ENCODE measurements at regions of chr3 and their contacts with region 1.

Region 1: DNA sequence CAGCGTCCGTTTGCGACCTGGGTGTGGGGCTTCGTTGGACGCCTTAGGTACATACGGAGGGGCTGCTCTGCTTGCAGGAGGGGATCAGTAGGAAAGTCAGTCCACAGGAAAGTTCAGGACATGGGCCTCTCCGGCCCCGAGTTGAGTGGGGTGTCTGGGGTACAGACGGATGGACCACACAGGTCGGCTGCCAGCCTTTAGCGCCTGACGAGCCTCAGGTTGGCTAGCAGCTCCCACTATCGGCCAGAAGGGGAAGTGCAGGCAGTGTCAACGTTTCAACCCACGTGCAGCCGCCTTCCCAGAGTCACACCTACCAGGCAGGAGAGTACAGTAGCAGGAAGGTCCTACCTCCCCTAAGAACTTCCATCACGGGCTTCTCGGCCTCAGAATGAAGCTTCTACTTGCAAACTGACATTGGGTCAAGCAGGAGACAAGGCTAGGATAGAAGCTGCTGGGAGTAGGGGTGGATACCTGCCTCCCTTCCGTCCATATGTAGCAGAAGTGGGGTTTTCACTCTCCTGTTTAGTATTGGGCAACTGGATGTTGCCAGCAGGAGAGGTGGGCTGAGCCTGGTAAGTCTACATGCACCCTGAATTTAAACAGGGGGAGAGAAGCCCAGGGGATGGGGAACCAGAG is 1.8 kb upstream of the SCN5A start:
- DNase-seq: no peak
- H3K4me3 ChIP-seq: no peak overlapping the region
- CTCF ChIP-seq: peak; percentile 96

Region 2: GRCh38 chr3:38404286-38404685 is 247.0 kb before region 1 on chr3:
- CTCF ChIA-PET with region 1: no interaction called
- POLR2A ChIA-PET with region 1: no interaction called
- DNase-seq: no peak
- H3K4me3 ChIP-seq: no peak overlapping the region
- CTCF ChIP-seq: no peak

Region 3: DNA sequence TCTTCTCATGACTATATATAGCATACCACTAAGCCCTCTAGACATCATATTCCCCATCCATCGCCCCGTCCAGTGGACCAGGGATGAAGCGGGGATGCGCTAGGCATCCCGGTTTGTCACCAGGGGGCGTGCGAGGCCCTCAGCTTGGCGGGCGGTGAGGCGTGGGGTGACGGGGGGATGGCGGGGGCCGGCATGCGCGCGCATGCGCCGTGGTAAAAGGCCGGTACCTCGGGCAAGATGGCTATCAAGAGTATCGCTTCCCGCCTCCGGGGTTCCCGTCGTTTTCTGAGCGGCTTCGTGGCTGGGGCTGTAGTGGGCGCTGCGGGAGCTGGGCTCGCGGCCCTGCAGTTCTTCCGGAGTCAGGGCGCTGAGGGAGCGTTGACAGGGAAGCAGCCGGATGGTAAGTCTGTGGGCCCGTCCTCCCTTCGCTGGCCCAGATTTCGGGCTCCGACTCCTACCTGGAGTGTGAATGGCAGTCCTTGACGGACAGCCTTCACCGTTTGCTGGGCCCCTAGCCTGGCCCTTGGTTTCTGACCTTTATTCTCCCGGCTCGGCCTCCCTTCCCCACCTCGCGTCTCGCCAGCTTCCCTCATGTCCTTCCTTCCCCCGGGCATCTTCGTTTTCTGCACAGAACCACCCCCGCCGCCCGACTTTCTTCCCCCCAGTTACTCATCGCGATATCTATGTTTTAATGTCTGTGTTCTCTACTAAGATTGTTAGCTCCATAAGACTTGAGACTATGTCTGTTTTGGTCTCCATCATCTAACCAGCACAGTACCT is 155.0 kb before region 1 on chr3 and contains the start of gene EXOG:
- CTCF ChIA-PET with region 1: interaction called, 18 read pairs
- POLR2A ChIA-PET with region 1: no interaction called
- DNase-seq: peak; percentile 42
- H3K4me3 ChIP-seq: peak within 1 kb of the TSS; percentile 86
- CTCF ChIP-seq: peak; percentile 90

Region 4: DNA sequence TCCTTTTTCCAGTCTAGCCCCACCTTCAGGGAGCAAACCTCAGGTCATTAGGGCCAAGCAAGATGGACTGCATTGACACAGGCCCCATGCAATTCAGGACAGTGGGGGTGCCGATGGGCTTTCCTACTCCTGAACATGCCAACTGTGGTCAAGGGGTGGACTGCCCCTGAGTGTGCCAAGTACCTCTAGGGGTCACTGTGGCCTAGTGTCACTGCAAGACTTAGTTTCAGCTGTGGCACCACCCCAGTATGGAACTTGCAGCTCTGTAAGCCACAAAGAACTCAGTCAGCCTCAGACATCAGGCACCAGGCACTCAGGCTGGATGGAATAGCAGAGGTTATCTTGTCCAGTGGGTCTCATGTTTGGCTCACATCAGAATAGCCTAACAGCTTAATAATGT is 122.8 kb before region 1 on chr3:
- CTCF ChIA-PET with region 1: interaction called, 334 read pairs
- POLR2A ChIA-PET with region 1: no interaction called
- DNase-seq: no peak
- H3K4me3 ChIP-seq: no peak overlapping the region
- CTCF ChIP-seq: no peak

Region 5: GRCh38 chr3:38640661-38641452 is 10.4 kb before region 1 on chr3:
- CTCF ChIA-PET with region 1: interaction called, 17 read pairs
- POLR2A ChIA-PET with region 1: no interaction called
- DNase-seq: no peak
- H3K4me3 ChIP-seq: no peak overlapping the region
- CTCF ChIP-seq: no peak

Region 6: DNA sequence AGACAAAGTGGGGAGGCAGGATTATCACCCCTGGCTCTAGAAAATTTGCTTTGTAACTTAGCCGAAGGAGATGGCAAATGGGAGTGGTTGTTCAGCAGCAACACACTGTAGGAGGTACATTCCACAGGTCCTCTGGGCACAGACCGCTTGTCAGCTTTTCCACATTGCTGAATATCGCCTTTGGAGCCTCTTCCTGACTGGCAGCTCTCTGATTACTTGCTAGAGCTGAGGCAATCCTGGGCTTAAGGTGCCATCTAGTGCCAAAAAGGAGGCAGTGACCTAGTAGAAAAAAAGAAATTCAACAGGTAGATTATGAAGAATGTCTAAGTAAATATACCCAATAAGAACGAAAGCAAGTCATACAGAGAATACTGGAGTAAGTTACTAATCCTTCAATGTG is 11.3 kb after region 1 on chr3:
- CTCF ChIA-PET with region 1: interaction called, 23 read pairs
- POLR2A ChIA-PET with region 1: no interaction called
- DNase-seq: no peak
- H3K4me3 ChIP-seq: no peak overlapping the region
- CTCF ChIP-seq: peak; percentile 14

Region 7: DNA sequence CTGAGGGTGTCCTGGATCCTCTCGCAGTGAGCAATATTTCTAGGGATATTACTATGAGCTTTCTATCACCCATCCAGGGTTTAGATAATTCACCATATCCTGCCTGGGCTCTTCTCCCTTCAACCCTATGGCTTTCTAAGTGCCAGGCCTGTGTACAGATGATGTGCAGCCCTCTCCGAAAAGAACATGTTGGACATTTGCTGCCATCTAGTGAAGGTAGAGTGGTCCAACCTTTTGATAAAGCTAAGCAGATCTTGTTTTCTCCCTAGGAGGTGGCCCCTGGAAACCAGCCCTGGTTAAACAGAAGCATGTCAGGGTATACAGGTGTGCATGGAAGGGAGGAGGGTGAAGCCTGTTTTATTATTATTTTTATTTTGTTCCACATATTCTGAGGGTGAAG is 192.6 kb after region 1 on chr3:
- CTCF ChIA-PET with region 1: interaction called, 13 read pairs
- POLR2A ChIA-PET with region 1: no interaction called
- DNase-seq: no peak
- H3K4me3 ChIP-seq: no peak overlapping the region
- CTCF ChIP-seq: peak; percentile 61

Measured in AG04449 (cell line).